ENCODE measurements at regions of chr10 and their contacts with region 1.

Region 1: GRCh38 chr10:81996927-81997326 is 121.9 kb downstream of the NRG3 start:
- DNase-seq: no peak
- H3K4me3 ChIP-seq: no peak overlapping the region
- H3K27ac ChIP-seq: no peak overlapping the region
- H3K4me1 ChIP-seq: no peaks in the 10 kb centered on the region
- H3K27me3 ChIP-seq: no peaks in the 10 kb centered on the region
- CTCF ChIP-seq: no peak

Region 2: GRCh38 chr10:82027711-82028110 is 30.8 kb after region 1 on chr10:
- CTCF ChIA-PET with region 1: no interaction called
- POLR2A ChIA-PET with region 1: no interaction called
- intact Hi-C with region 1: loop called (anchors 2 kb)
- DNase-seq: no peak
- H3K4me3 ChIP-seq: no peak overlapping the region
- H3K27ac ChIP-seq: no peak overlapping the region
- H3K4me1 ChIP-seq: no peaks in the 10 kb centered on the region
- H3K27me3 ChIP-seq: no peaks in the 10 kb centered on the region
- CTCF ChIP-seq: no peak

Measured in PC-9 (cell line).